ENCODE measurements at regions of chr6 and their contacts with region 1.

Region 1: GRCh38 chr6:33200219-33201146 is at the starts of genes RXRB and SLC39A7:
- DNase-seq: peak; percentile 99
- H3K4me3 ChIP-seq: peak within 1 kb of the TSS; percentile 96
- H3K27ac ChIP-seq: peak within 1 kb of the TSS; percentile 77
- H3K4me1 ChIP-seq: peaks cover 57% of the 10 kb centered on the region
- CTCF ChIP-seq: no peak
- total RNA-seq, gene RXRB: 30.6 and 32.5 TPM in 2 replicates
- total RNA-seq, gene SLC39A7: 22.9 and 29.2 TPM in 2 replicates

Region 2: GRCh38 chr6:33161354-33162331 is 38.8 kb before region 1 on chr6:
- CTCF ChIA-PET with region 1: no interaction called
- POLR2A ChIA-PET with region 1: no interaction called
- intact Hi-C with region 1: loop called (anchors 2 kb)
- DNase-seq: peak; percentile 71
- H3K4me3 ChIP-seq: peak overlapping the region; percentile 53
- H3K27ac ChIP-seq: no peak overlapping the region
- H3K4me1 ChIP-seq: peaks cover 7% of the 10 kb centered on the region
- CTCF ChIP-seq: peak; percentile 93

Region 3: DNA sequence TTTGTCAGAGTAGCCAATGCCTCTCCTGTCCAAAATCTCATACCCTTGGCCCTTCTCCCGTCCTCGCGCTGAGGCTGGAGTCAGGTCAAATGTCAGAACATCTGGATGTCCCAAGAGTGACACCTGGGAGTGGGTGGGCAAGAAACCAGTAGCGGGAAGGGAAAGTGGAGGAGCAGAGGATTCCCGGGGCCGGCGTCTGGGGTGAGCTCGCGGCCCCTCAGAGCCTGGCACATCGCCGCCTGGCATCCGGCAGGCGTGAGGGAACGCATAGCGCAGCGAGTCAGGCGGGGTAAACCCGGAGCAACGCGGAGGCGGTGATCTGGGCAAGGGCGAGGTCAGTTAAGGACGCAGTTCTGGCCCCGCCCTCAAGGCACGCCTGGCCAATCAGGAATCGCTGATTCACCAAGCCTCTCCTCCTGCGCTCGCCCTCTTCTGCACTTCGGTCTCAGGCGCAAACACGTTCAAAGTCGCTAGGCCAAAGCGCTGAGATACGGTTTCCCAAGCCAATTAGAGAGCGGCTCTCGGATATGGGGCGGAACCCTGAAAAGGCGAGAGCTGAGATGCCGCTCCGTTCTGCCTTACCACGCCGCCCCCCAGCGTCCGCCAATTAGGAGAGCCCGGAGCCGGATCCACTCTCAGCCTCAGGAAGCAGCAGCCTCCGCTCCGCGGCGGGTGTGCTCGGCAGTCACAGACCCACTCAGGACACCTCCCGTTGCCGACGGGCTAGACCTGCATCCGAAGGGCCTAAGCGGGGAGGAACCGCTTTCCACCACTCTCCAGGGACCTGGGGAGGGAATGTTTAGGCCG is 48.6 kb after region 1 on chr6:
- CTCF ChIA-PET with region 1: interaction called, 9 read pairs
- POLR2A ChIA-PET with region 1: interaction called, 8 read pairs
- intact Hi-C with region 1: loop called (anchors 1 kb)
- DNase-seq: peak; percentile 99
- H3K4me3 ChIP-seq: peak overlapping the region; percentile 73
- H3K27ac ChIP-seq: peak overlapping the region; percentile 74
- H3K4me1 ChIP-seq: peaks cover 23% of the 10 kb centered on the region
- CTCF ChIP-seq: no peak

Region 4: DNA sequence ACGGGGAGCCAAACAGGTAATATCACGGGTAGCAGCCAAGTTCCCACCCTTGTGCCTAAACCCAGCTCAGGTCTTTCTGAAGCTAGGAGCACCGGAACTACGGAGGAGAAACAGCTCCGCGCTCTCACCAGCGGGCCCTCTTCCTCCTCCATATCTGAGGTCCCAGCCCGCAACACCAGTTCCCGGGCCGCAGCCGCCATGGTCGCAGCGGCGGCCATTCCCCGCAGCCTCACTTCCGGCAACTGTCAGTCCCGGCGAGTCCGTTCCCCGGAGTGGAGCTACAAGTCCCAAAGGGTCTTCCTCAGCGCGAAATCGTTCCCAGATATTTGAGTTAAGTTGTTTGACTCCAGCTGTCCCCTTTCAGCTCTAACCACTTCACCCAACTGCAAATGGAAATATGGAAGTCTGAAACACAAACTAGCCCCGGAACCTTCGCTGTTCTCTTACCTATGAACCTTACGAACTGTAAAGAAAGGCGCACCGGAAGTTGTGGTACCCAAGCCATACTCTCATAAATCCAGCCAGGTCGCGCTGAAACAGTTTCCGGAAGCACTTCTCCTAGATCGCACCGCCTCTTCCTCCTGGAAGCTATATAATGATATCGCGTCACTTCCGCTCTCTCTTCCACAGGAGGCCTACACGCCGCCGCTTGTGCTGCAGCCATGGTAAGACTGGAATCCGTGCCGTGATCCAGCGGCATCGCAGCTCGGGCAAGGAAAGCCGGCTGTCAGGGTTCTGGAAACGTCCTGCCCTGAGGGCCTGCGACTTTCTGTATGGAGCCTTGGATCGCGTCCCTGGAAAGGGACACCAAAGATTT is 71.2 kb after region 1 on chr6 and contains the starts of genes RPS18 and VPS52:
- CTCF ChIA-PET with region 1: no interaction called
- POLR2A ChIA-PET with region 1: no interaction called
- intact Hi-C with region 1: loop called (anchors 2 kb)
- DNase-seq: peak; percentile 99
- H3K4me3 ChIP-seq: peak within 1 kb of the TSS; percentile 97
- H3K27ac ChIP-seq: peak within 1 kb of the TSS; percentile 93
- H3K4me1 ChIP-seq: peaks cover 43% of the 10 kb centered on the region
- CTCF ChIP-seq: no peak; the same call in 1 of the 2 replicates
- total RNA-seq, gene RPS18: 7,191 and 8,620 TPM in 2 replicates
- total RNA-seq, gene VPS52: 50.4 and 53.5 TPM in 2 replicates

Region 5: DNA sequence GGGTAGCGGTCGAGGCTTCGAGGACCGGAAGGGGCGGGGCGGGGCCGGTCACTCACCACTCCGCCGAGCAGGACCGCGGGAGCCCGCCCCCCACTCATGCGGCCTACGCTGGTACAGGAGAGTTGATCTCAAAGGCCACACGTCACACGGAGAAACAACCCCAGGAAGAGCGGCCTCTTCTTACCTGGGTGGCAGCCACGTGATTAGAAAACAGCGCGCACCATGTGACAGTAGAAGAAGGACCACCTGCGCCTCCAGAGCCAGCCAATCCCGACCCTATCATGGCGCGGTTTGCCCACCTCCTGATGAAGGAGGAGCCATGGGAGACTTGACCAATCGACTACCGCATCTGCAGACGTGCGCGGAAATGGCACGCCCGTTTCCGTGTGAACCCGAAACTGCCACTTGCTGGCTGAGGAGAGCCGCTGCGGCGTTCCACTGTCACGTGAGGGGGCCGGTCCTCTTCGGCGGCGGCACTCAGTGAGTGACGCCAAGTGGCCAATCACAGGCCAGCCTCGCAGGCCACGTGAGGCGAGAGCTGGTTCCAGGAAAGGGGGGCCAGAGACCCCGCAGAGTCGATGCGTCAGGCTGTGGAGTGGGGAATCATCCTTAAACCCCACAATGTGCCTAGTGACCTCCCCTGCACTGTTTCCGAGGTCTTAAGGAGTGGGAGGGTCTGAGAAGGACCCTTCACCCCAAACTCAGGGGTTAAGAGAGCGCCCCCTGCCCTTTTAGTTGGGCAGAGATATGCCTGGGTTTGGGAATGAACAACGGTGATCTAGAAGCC is 217.6 kb after region 1 on chr6 and contains the start of gene CUTA:
- CTCF ChIA-PET with region 1: no interaction called
- POLR2A ChIA-PET with region 1: no interaction called
- intact Hi-C with region 1: loop called (anchors 10 kb)
- DNase-seq: peak; percentile 100
- H3K4me3 ChIP-seq: peak within 1 kb of the TSS; percentile 77
- H3K27ac ChIP-seq: peak within 1 kb of the TSS; percentile 76
- H3K4me1 ChIP-seq: peaks cover 56% of the 10 kb centered on the region
- CTCF ChIP-seq: peak; percentile 80
- total RNA-seq, gene CUTA: 147 and 164 TPM in 2 replicates

Region 6: DNA sequence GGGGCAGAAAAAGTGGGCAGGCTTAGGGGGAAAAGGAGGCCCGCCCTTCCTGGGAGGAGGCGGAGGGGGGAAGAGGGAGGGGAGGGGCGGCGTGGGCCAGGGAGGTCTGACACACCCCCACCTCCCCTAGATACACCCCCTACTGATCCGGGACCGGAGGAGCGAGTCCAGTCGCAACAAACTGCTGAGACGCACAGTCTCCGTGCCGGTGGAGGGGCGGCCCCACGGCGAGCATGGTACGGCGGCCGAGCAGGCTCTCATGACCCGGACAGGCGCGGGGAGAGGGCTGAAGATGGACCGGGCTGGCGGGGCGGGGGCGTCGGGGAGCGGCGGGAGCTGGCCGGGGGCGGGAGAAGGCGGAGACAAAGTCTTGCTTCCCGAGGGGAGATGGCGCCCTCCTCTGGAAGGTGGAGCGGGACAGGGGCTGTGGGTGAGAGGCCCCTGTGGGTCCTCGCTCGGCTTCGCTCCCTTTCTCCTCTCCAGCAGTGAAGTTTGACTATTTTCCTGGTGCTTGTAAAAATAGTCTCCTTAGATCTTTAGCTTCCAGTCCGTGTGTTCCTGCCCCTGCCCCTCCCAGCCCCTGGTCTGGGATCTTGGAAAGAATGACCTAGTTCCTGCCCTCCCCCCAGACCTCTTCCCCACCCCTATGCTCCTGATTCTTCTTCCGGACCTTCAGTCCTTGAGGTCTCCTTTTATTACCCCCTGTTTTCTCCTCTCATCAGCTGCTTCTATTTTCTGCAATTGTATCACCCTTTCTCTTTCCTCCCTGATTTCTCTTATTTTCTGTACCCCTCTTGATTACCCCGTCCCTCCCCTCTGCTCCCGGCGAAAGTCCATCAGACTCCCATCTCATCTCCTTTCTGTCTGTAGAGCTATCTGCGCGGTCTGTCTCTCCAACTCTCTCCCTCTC is 225.4 kb after region 1 on chr6:
- CTCF ChIA-PET with region 1: interaction called, 12 read pairs
- POLR2A ChIA-PET with region 1: no interaction called
- intact Hi-C with region 1: no loop called
- DNase-seq: peak; percentile 78
- H3K4me3 ChIP-seq: peak overlapping the region; percentile 67
- H3K27ac ChIP-seq: peak overlapping the region; percentile 58
- H3K4me1 ChIP-seq: peaks cover 51% of the 10 kb centered on the region
- CTCF ChIP-seq: peak; percentile 75

Region 7: GRCh38 chr6:34082864-34083626 is 882.6 kb after region 1 on chr6:
- CTCF ChIA-PET with region 1: no interaction called
- POLR2A ChIA-PET with region 1: no interaction called
- intact Hi-C with region 1: no loop called
- DNase-seq: no peak
- H3K4me3 ChIP-seq: no peak overlapping the region
- H3K27ac ChIP-seq: no peak overlapping the region
- H3K4me1 ChIP-seq: no peaks in the 10 kb centered on the region
- CTCF ChIP-seq: no peak